ENCODE measurements at regions of chr6 and their contacts with region 1.

Region 1: GRCh38 chr6:132161283-132161682 is 210.1 kb upstream of the CCN2 start:
- DNase-seq: peak; percentile 16
- ATAC-seq: peak; percentile 77
- H3K4me3 ChIP-seq: no peak overlapping the region
- H3K27ac ChIP-seq: no peak overlapping the region
- H3K4me1 ChIP-seq: no peaks in the 10 kb centered on the region
- H3K27me3 ChIP-seq: no peaks in the 10 kb centered on the region
- CTCF ChIP-seq: peak; percentile 53 to 63 (median 60); a peak in 5 of 6 replicates
- POLR2A ChIP-seq: no peak
- RAD21 ChIP-seq: peak; percentile 76

Region 2: GRCh38 chr6:131948692-131949619 is 212.3 kb before region 1 on chr6:
- CTCF ChIA-PET with region 1: no interaction called
- POLR2A ChIA-PET with region 1: no interaction called
- RAD21 ChIA-PET with region 1: no interaction called
- intact Hi-C with region 1: loop called (anchors 5 kb)
- DNase-seq: no peak
- ATAC-seq: no peak
- H3K4me3 ChIP-seq: no peak overlapping the region
- H3K27ac ChIP-seq: no peak overlapping the region
- H3K4me1 ChIP-seq: peaks cover 9 to 25% of the 10 kb centered on the region in 2 experiments
- H3K27me3 ChIP-seq: no peaks in the 10 kb centered on the region
- CTCF ChIP-seq: no peak
- POLR2A ChIP-seq: no peak
- RAD21 ChIP-seq: no peak

Region 3: GRCh38 chr6:132445201-132445951 is 284.1 kb after region 1 on chr6:
- CTCF ChIA-PET with region 1: no interaction called
- POLR2A ChIA-PET with region 1: no interaction called
- RAD21 ChIA-PET with region 1: no interaction called
- intact Hi-C with region 1: no loop called
- DNase-seq: no peak
- ATAC-seq: no peak
- H3K4me3 ChIP-seq: no peak overlapping the region
- H3K27ac ChIP-seq: no peak overlapping the region
- H3K4me1 ChIP-seq: no peaks in the 10 kb centered on the region
- H3K27me3 ChIP-seq: no peaks in the 10 kb centered on the region
- CTCF ChIP-seq: no peak
- POLR2A ChIP-seq: no peak
- RAD21 ChIP-seq: no peak

Measured in HCT116 (cell line).